Calu3 (cell line): ENCODE measurements at regions of chr1 and their contacts with region 1.

Region 1: DNA sequence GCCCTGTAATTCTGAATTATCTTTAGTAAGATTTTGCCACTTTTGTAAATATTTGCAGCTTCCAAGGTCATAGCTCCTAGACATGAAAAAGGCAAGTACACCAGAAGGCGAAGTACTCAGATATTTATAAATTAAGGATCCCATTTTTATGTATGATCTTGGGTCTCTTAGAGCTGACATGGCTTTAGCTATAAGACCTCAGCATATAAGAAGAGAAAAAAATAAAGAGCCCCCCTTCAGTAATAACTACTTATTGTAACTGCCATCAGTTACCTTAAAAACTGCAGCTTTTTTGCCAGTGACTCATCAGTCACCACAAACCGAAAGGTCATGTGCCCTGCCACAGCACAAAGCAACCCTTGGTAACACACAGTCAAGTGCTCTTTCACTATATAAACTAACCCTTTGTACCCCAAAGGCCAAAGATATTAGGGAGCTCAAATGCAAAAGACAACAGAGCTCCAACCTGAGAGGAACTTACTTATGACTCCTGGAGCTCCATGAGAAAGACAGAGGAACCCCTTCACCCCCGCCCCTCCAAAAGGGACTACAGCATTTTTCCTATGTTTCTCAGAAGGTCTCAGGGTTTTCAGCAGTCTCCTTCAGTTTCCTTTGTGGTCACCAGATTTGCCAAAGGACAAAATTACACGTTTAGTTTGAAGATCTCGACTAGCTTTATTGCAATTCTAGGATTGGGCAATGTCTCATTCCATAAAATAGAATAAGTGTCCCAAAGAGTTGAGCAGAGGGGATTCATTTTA is 219.8 kb upstream of the DUSP10 start:
- DNase-seq: peak; percentile 74
- H3K4me3 Mint-ChIP-seq: peak overlapping the region; percentile 51
- H3K27ac Mint-ChIP-seq: peak overlapping the region; percentile 94
- H3K4me1 Mint-ChIP-seq: peaks cover 68% of the 10 kb centered on the region
- H3K27me3 Mint-ChIP-seq: no peaks in the 10 kb centered on the region
- CTCF ChIP-seq: no peak

Region 2: GRCh38 chr1:221548942-221549341 is 412.8 kb before region 1 on chr1:
- CTCF ChIA-PET with region 1: interaction called, 3 read pairs
- intact Hi-C with region 1: loop called (anchors 5 kb)
- DNase-seq: no peak
- H3K4me3 Mint-ChIP-seq: no peak overlapping the region
- H3K27ac Mint-ChIP-seq: no peak overlapping the region
- H3K4me1 Mint-ChIP-seq: peaks cover 2% of the 10 kb centered on the region
- H3K27me3 Mint-ChIP-seq: no peaks in the 10 kb centered on the region
- CTCF ChIP-seq: no peak

Region 3: DNA sequence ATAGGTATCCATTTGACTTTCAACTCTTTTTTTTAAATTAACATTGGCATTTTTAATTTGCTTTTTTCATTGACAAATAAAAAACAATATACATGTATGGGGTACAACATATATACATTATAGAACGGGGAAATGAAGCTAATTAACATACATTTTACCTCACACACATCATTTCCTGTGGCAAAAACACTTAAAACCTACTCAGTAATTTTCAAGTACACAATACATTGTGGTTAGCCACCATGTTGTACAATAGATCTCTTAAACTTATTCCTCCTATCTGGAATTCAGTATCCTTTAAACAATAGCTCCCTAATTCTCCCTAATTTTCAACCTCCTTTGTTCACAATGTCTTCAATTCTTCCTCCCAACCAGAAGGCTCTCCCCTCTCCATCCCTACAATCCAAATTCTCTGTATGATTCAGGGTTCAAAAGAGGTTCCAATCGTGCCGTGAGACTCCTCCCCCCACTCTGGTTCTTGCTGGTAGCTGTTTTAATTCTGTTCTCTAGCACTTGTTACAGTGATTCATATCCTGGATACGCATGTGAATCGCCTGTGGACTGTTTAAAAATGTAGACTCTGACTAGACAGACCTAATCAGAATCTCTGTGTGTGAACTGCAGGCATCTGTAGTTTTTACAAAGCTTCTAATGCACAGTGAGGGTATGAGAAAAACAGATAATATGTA is 132.2 kb before region 1 on chr1:
- CTCF ChIA-PET with region 1: no interaction called
- intact Hi-C with region 1: loop called (anchors 5 kb)
- DNase-seq: peak; percentile 53
- H3K4me3 Mint-ChIP-seq: peak overlapping the region; percentile 50
- H3K27ac Mint-ChIP-seq: peak overlapping the region; percentile 96
- H3K4me1 Mint-ChIP-seq: peaks cover 88% of the 10 kb centered on the region
- H3K27me3 Mint-ChIP-seq: no peaks in the 10 kb centered on the region
- CTCF ChIP-seq: no peak

Region 4: DNA sequence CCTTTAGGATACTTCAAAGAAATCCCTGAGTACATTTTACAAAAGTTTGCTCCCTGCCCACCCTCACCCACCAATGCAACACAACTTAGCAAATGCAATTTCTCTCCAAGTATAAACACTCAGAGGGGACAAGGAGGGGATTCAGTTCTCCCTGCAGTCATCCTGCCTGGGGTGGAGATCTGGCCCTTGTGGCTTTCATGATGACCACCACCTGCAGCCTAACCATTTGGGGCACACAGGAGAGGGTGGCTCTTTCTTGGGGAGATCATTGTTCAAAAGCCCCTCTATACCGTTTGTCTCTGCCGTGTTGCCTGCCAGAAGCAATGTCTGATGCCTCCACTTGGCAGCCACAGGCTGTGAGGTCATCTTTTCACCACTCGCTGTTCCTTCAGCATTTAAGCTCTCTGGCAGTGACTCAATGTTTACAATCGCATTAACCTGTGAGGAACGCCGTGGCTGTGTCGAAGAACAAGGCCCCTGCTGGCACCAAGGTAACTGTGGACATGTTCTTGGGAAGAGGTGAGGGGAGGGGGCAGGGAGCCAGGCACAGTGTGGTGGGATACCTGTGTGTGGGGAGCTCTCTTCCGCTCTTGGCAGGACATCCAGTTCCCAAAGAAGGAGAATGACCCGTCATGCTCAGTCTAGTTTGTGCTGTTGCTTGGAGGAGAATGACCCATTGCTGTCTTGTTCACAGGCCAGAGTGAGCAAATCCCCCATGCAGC is 115.9 kb before region 1 on chr1:
- CTCF ChIA-PET with region 1: no interaction called
- intact Hi-C with region 1: loop called (anchors 5 kb)
- DNase-seq: peak; percentile 70
- H3K4me3 Mint-ChIP-seq: no peak overlapping the region
- H3K27ac Mint-ChIP-seq: peak overlapping the region; percentile 51
- H3K4me1 Mint-ChIP-seq: peaks cover 54% of the 10 kb centered on the region
- H3K27me3 Mint-ChIP-seq: no peaks in the 10 kb centered on the region
- CTCF ChIP-seq: no peak

Region 5: DNA sequence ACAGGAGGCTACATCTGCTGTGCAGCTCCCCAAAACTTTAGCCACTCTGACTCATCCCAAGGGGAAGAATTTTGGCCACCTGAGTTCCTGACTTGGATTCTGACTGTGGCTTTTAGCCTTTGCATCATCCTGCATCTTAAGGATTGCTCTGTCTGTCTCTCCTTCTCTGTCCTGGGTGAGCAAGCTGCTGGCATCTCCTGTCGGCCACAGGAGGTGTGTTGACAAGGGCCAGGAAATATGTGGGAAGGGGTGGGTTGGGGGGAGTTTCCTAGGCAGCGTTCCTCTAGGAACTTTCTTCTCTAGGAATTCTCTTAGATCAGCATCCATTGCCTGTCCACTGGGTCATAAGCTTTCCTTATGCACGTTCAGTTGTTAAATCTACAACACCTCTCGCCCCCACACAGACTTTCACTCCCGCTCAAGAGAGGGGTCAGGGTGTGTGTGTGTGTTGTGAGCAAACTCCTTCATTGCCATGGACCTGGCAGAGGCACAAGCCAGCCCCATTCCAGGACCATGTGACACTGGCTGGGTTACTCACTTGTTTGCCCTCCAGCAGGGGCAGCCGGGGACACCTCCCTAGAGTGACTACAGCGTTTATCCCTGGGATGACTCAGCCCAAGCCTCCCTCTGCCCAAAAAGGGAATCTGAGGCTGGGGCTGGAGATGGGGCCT is 74.8 kb before region 1 on chr1:
- CTCF ChIA-PET with region 1: interaction called, 3 read pairs
- intact Hi-C with region 1: loop called (anchors 1 kb)
- DNase-seq: peak; percentile 91
- H3K4me3 Mint-ChIP-seq: peak overlapping the region; percentile 57
- H3K27ac Mint-ChIP-seq: peak overlapping the region; percentile 93
- H3K4me1 Mint-ChIP-seq: peaks cover 48% of the 10 kb centered on the region
- H3K27me3 Mint-ChIP-seq: no peaks in the 10 kb centered on the region
- CTCF ChIP-seq: peak; percentile 23

Region 6: GRCh38 chr1:221947731-221948130 is 14.0 kb before region 1 on chr1:
- CTCF ChIA-PET with region 1: no interaction called
- intact Hi-C with region 1: loop called (anchors 1 kb)
- DNase-seq: peak; percentile 62
- H3K4me3 Mint-ChIP-seq: peak overlapping the region; percentile 39
- H3K27ac Mint-ChIP-seq: peak overlapping the region; percentile 97
- H3K4me1 Mint-ChIP-seq: peaks cover 37% of the 10 kb centered on the region
- H3K27me3 Mint-ChIP-seq: no peaks in the 10 kb centered on the region
- CTCF ChIP-seq: no peak